Dorsolateral prefrontal cortex (tissue), 120 donors: ENCODE measurements at regions of chr6 and their contacts with region 1.

Region 1: DNA sequence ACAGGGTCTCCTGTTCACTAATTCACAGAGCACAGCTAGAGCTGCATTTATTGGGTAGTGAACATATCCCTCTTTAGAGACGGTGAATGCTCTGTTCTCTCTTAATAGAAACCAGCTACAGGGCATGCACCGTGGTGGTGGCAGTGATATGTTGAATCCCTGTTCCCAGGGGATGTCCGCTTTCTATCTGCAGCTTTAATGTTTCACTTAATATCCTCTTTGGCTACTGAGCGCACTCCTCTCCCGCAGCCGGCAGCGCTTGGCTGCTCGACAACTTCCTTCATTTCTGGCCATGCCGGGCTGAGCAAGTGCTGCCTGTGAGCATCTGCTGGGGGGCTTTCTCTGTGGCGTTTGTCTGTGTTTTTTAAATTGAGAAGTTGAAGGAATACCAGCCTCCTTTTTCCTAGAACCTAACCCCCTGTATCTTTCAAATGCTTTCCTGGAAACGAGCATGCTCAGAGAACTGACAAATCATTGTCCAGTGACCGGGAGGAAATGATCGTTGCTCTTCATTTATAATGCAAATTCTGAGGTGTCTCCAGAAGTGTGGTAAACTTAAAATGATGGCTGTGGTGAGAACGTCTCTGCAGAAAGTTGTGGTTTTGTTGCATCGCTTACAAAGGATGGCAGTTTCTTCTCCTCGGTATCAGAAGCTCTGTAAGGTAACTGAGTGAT is 297.9 kb downstream of the UTRN start:
- DNase-seq: peak in 6 of 10 donors; percentile 16 to 54 (median 32)
- H3K4me3 ChIP-seq: peak overlapping the region in 58 of 59 donors; percentile 16 to 66 (median 44)
- H3K27ac ChIP-seq: peak overlapping the region in 30 of 59 donors; percentile 1 to 73 (median 33)
- H3K27me3 ChIP-seq: peaks cover 0 to 19% (median 0%) of the 10 kb centered on the region in 45 donors
- CTCF ChIP-seq: peak in 1 of 56 donors; percentile 4

Region 2: GRCh38 chr6:144408161-144408560 is 174.9 kb before region 1 on chr6:
- intact Hi-C with region 1: no loop called
- DNase-seq: no peak
- H3K4me3 ChIP-seq: no peak overlapping the region
- H3K27ac ChIP-seq: no peak overlapping the region
- H3K27me3 ChIP-seq: no peaks in the 10 kb centered on the region
- CTCF ChIP-seq: no peak

Region 3: DNA sequence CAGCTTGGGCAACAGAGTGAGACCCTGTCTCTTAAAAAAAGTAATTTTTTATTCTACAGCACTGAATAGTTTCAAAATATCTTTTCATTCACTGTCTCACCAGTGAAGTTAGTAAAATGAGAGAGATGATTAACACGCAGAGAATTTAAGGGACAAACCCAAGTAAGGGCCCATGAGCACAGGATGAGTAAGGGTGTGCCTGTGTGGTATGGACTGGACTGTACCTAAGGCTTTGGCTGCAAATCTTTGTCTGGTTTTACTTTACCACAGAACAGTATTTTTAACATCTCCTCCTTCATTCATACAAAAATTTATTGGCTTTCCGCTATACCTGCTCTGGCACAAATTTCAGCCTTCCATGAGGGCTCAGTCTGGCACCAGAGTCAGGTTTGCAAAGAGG is 135.4 kb after region 1 on chr6:
- intact Hi-C with region 1: no loop called
- DNase-seq: no peak
- H3K4me3 ChIP-seq: no peak overlapping the region
- H3K27ac ChIP-seq: no peak overlapping the region
- H3K27me3 ChIP-seq: no peaks in the 10 kb centered on the region
- CTCF ChIP-seq: no peak

Region 4: GRCh38 chr6:144835322-144835973 is 252.4 kb after region 1 on chr6:
- intact Hi-C with region 1: loop called in 1 of 2 experiments (anchors 10 kb)
- DNase-seq: no peak
- H3K4me3 ChIP-seq: no peak overlapping the region
- H3K27ac ChIP-seq: peak overlapping the region in 3 of 59 donors; percentile 3 to 31 (median 19)
- H3K27me3 ChIP-seq: no peaks in the 10 kb centered on the region
- CTCF ChIP-seq: no peak

Region 5: DNA sequence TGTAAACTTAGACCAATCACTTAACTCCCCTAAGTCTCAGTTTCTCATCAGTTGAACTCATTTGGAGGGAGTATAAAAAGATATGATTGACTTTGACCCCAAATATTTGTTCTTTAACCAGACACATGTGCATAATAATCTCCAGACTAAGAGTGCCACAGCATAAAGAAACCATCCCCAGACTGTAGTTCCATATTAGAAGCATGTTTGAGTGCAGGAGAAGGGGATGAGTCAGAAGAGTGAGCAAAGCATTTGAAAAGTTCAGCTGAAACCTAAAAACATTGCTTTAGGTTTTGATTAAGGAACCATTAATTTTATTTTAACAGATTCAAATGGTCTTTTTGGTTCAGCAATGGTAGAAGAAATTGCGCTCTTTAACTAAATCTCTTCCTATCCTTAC is 356.8 kb after region 1 on chr6:
- intact Hi-C with region 1: loop called in 1 of 2 experiments (anchors 5 kb)
- DNase-seq: no peak
- H3K4me3 ChIP-seq: no peak overlapping the region
- H3K27ac ChIP-seq: no peak overlapping the region
- H3K27me3 ChIP-seq: no peaks in the 10 kb centered on the region
- CTCF ChIP-seq: no peak

Region 6: DNA sequence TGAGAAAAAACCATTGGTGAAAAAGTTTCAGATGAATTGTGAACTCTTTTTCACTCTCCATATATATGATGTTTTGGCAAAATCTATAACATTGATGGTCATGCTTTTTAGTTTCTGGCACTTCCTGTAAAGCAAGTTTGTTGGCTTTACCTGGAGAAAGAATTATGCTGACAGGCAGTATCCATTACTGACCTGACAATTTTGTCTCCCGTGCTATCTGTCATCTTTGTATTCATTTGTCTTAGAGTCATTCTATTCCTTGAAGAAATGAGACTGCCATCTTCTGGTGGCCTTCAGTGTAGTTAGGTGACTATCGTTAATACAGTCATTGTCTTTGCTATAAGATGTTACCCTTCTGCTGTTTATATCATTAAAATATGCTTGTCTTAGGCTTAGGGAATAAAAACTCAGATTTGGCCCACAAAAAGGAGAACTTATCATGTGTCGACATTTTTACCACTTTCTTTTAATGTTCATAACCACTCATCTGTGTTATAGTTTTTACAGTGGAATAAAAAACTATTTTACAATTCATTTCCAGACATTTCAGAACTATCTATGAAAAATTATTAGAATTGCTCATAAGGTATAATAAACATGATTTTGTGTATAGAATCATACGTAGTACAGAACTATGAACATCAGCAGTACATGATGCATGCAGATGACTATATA is 445.2 kb after region 1 on chr6:
- intact Hi-C with region 1: loop called in 1 of 2 experiments (anchors 5 kb)
- DNase-seq: no peak
- H3K4me3 ChIP-seq: no peak overlapping the region
- H3K27ac ChIP-seq: no peak overlapping the region
- H3K27me3 ChIP-seq: peaks cover 0 to 3% (median 0%) of the 10 kb centered on the region in 45 donors
- CTCF ChIP-seq: peak in 50 of 56 donors; percentile 29 to 70 (median 48)

Region 7: DNA sequence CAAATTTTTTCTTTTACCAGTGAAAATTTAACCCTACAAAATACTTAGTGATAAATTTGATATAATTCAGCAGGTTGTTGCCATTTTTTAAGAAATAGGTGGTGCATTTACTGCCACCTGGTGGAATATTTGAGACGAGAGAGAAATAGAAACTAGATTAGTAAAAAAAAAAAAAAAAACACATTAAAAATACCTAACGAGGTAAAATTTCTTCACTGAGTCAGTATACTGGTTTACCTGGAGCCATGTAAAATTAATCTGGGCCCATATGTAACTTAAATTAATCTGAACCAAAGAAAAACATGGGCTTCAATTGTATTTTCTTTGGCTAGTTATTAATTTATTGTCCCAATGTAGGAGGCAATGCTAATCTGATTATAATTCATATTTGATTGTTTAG is 631.5 kb after region 1 on chr6:
- intact Hi-C with region 1: loop called (anchors 2 to 5 kb)
- DNase-seq: no peak
- H3K4me3 ChIP-seq: no peak overlapping the region
- H3K27ac ChIP-seq: no peak overlapping the region
- H3K27me3 ChIP-seq: no peaks in the 10 kb centered on the region
- CTCF ChIP-seq: peak; percentile 41 to 77 (median 59)

Region 8: DNA sequence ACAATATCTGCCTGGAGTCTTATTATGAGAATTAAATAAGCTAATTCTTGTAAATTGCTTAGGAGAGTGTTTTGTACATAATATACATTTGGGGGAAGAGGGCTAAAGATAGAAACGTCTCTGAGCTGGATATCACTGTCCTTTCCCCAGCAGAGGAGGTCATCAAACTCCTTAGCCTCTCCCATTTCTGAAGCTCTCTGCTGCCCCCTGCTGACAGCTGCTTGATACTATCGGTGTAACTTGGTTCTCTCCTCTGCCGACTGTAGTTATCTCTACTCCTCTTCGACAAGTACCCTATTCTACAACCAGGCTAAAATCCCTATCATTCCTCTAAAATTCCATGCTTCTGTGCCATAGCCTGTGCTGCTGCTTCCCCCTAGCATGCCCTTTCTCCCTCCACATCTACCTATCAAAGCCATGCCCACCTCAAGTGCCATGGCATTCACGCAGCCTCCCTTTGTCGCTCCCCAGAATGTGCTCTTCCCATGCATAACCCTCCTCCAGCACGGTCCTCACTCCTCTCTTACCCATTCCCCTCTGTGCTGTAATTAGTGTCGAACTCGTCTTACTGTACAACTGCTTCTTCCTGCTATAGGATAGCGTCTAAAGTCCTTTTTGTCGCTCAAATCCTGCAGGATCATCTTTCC is 1051.0 kb after region 1 on chr6:
- intact Hi-C with region 1: loop called (anchors 5 kb)
- DNase-seq: peak; percentile 62 to 90 (median 86)
- H3K4me3 ChIP-seq: no peak overlapping the region
- H3K27ac ChIP-seq: no peak overlapping the region
- H3K27me3 ChIP-seq: no peaks in the 10 kb centered on the region
- CTCF ChIP-seq: peak; percentile 70 to 98 (median 91)